Activated naive CD4-positive, alpha-beta T cell treated with anti-CD3 and anti-CD28 coated beads, Interleukin-2, amount 10 ng/mL, durations not matched to agents 7 days and 5 days (primary cell): ENCODE measurements at regions of chr9 and their contacts with region 1.

Region 1: GRCh38 chr9:94603259-94604160 is 9.9 kb upstream of the FBP2 start:
- DNase-seq: peak; percentile 80
- H3K4me3 Mint-ChIP-seq: no peak overlapping the region
- H3K27ac Mint-ChIP-seq: no peak overlapping the region
- H3K4me1 Mint-ChIP-seq: no peaks in the 10 kb centered on the region
- H3K27me3 Mint-ChIP-seq: peaks cover 54% of the 10 kb centered on the region

Region 2: GRCh38 chr9:94554439-94555391 is 48.8 kb before region 1 on chr9 and contains the start of gene PCAT7:
- CTCF ChIA-PET with region 1: interaction called, 10 read pairs
- DNase-seq: peak; percentile 38
- H3K4me3 Mint-ChIP-seq: no peak within 1 kb of the TSS
- H3K27ac Mint-ChIP-seq: no peak within 1 kb of the TSS
- H3K4me1 Mint-ChIP-seq: no peaks in the 10 kb centered on the region
- H3K27me3 Mint-ChIP-seq: peaks cover 15% of the 10 kb centered on the region

Region 3: GRCh38 chr9:94785215-94786169 is 182.0 kb after region 1 on chr9:
- CTCF ChIA-PET with region 1: no interaction called
- DNase-seq: no peak
- H3K4me3 Mint-ChIP-seq: no peak overlapping the region
- H3K27ac Mint-ChIP-seq: no peak overlapping the region
- H3K4me1 Mint-ChIP-seq: peaks cover 7% of the 10 kb centered on the region
- H3K27me3 Mint-ChIP-seq: no peaks in the 10 kb centered on the region

Region 4: DNA sequence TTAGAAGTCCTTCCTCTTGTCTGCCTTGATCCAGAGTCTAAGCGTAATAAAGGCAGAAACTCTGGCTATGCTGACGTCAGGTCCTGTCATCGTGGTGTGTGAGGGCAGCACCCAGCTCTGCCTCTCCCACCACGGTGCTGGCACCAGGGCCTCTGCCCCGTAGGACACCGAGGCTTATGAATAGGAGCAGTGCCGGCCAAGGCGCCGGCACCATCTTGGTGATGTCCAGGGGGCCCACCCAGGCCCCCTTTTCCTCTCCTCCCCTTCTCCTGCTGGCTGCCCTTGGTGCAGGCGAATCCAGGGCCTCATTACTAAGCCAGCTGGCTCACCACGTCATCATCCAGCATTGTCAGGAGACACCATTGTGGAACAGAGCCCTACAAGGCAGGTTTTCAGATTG is 461.7 kb after region 1 on chr9:
- CTCF ChIA-PET with region 1: no interaction called
- DNase-seq: no peak
- H3K4me3 Mint-ChIP-seq: no peak overlapping the region
- H3K27ac Mint-ChIP-seq: no peak overlapping the region
- H3K4me1 Mint-ChIP-seq: peaks cover 6% of the 10 kb centered on the region
- H3K27me3 Mint-ChIP-seq: no peaks in the 10 kb centered on the region